ENCODE measurements at regions of chr5 and their contacts with region 1.

Region 1: GRCh38 chr5:133868946-133869518 is 99.4 kb downstream of the C5orf15 start:
- DNase-seq: peak; percentile 74
- ATAC-seq: peak; percentile 65
- H3K4me3 ChIP-seq: no peak overlapping the region
- H3K27ac ChIP-seq: no peak overlapping the region
- H3K4me1 ChIP-seq: peaks cover 39% of the 10 kb centered on the region
- H3K27me3 ChIP-seq: no peaks in the 10 kb centered on the region
- CTCF ChIP-seq: peak; percentile 85

Region 2: DNA sequence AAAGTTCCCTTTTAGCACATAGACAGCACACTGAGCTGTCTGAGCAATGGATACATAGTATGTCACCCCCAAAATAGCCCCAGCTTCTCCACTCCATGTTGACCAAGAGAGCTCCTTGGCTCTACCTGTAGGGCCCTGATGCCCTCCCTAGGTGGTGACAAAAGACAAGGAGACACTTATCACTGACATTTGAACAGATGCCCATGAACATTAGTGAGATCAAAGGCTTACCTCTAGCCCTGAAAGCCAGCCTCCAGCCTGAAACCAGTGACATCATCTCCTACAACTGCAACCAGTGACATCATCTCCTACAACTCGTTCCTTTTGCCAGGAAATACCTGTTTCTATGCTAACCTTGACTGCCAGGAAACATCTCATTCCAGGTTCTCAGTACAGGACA is 379.4 kb before region 1 on chr5:
- CTCF ChIA-PET with region 1: no interaction called
- POLR2A ChIA-PET with region 1: no interaction called
- intact Hi-C with region 1: loop called (anchors 1 kb)
- DNase-seq: peak; percentile 56
- ATAC-seq: peak; percentile 56; the same call in 1 of the 2 replicates
- H3K4me3 ChIP-seq: no peak overlapping the region
- H3K27ac ChIP-seq: no peak overlapping the region
- H3K4me1 ChIP-seq: no peaks in the 10 kb centered on the region
- H3K27me3 ChIP-seq: no peaks in the 10 kb centered on the region
- CTCF ChIP-seq: peak; percentile 61

Region 3: DNA sequence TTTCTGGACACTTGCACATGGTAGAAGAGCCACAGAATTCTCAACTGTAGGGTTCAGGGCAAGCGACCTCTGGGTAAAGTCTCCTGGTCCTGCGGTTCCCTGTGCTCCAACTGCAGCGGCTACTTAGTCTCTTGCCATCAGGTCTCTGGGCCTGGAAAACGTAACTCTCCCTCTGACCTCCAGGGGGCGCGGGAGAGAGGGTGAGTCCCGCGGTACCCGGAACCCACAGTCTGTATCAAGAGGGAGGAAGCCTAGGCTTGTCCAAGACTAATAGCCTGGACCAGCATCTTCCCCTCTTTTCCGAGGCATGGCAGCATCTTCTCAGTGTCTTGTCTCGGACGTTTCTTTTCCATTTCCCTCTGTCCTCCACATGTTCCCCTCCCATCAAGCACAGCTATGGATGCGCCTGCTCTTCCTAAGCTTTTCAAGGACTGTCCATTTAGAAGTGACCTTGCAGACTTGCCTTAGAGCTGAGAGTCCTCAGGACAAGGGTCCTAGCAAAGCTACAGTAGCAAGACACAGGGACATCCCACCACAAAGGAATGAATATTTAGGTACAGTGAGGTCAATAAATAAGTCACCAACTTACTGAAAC is 316.0 kb before region 1 on chr5:
- CTCF ChIA-PET with region 1: no interaction called
- POLR2A ChIA-PET with region 1: no interaction called
- intact Hi-C with region 1: loop called (anchors 10 kb)
- DNase-seq: peak; percentile 63
- ATAC-seq: peak; percentile 78
- H3K4me3 ChIP-seq: no peak overlapping the region
- H3K27ac ChIP-seq: no peak overlapping the region
- H3K4me1 ChIP-seq: no peaks in the 10 kb centered on the region
- H3K27me3 ChIP-seq: no peaks in the 10 kb centered on the region
- CTCF ChIP-seq: peak; percentile 73

Measured in PC-3 (cell line).